HEK293 (cell line): ENCODE measurements at regions of chrX and their contacts with region 1.

Region 1: GRCh38 chrX:78024349-78025108 is 55.1 kb upstream of the PGAM4 start:
- H3K4me3 ChIP-seq: no peak overlapping the region
- H3K27ac ChIP-seq: no peak overlapping the region
- H3K4me1 ChIP-seq: no peaks in the 10 kb centered on the region
- CTCF ChIP-seq: peak; percentile 62

Region 2: DNA sequence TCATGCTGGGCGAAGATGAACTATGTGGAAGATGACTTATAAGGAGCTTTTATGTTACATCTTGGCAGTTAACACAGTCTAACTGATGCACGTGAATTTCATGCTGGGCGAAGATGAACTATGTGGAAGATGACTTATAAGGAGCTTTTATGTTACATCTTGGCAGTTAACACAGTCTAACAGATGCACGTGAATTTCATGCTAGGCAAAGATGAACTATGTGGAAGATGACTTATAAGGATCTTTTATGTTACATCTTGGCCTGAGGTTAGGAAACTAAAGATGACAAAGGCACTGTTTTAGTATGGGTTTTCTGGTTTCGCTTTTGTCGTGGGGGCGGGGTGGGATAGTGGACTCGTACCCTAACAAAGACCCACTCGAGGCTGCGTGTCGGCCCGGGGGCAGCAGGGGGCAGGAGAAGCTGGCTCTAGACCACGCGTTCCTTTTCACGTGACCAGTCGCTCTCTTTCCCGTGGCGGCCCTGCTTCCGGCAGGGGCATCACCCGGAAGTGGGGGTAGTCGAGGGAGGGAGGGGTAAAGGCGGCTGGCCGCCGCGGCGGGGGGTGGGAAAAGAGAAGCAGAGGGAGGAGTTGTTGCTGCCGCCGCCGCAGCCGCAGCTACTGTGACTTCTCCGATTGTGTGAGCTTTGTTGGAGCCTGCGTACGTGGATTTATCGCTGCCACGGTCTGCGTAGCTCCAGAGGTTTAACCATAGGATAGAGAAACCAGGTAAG is 114.3 kb before region 1 on chrX and contains the start of gene ATP7A:
- CTCF ChIA-PET with region 1: interaction called, 11 read pairs
- POLR2A ChIA-PET with region 1: no interaction called
- H3K4me3 ChIP-seq: peak within 1 kb of the TSS; percentile 44
- H3K27ac ChIP-seq: peak within 1 kb of the TSS; percentile 73
- H3K4me1 ChIP-seq: no peaks in the 10 kb centered on the region
- CTCF ChIP-seq: peak; percentile 71; the same call in 1 of the 2 replicates

Region 3: DNA sequence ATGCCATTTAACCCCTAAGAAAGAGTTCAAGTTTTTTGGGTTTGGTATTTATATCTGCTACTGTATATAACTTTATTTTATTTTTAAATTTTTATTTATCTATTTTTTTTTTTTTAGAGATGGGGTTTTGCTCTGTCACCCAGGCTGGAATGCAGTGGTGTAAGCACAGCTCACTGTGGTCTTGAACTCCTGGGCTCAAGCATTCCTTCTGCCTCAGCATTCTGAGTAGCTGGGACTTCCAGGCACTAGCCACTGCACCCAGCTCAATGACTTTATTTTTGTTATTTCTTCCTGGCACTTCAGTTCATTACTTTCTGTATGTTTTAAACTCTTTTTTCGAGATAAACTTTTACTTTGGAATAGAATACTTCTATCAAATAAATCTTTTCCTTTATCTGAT is 12.7 kb before region 1 on chrX:
- CTCF ChIA-PET with region 1: interaction called, 15 read pairs
- POLR2A ChIA-PET with region 1: no interaction called
- H3K4me3 ChIP-seq: no peak overlapping the region
- H3K27ac ChIP-seq: no peak overlapping the region
- H3K4me1 ChIP-seq: no peaks in the 10 kb centered on the region
- CTCF ChIP-seq: no peak

Region 4: DNA sequence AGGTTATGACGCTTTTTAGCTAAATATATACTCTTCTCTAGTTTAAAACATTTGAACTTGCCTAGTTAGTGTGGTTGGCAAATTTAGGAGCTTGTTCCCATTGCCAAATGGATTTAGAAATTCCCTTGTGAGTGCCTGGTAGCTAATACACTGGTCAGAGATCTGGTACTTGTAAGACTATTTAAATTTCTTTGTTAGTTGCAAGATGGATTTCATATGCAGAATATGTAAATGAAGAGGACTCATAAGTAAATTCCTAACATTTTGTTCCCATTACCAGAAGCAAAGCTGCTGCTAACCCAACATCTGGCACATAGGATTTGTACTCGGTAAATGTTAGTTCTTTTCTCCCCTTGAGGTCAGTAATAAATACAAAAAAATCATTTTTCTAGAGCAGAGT is 23.5 kb after region 1 on chrX:
- CTCF ChIA-PET with region 1: interaction called, 20 read pairs
- POLR2A ChIA-PET with region 1: no interaction called
- H3K4me3 ChIP-seq: no peak overlapping the region
- H3K27ac ChIP-seq: no peak overlapping the region
- H3K4me1 ChIP-seq: no peaks in the 10 kb centered on the region
- CTCF ChIP-seq: no peak